ENCODE measurements at regions of chr12 and their contacts with region 1.

Region 1: DNA sequence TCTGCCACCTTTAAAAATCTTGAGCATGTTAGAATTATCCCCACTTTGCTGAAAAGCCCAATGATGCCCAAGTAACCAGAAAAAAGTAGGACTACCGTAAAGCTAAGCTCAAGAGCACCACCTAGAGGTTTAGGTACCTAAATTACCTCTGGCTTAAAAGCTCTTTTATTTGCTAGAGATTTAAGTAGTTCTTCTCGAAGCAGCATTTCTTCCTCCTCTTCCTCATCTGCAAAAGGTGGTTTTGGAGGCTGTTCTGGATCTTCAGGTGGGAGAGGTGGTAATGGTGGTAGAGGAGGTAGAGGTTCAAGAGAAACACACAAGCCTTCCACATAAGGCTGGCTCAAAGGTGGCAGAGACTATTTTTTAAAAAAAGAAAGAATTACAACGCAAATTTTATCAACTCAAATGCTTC is 26.9 kb downstream of the ZFC3H1 start:
- DNase-seq: peak; percentile 70
- H3K4me3 Mint-ChIP-seq: no peak overlapping the region
- H3K27ac Mint-ChIP-seq: no peak overlapping the region
- H3K4me1 Mint-ChIP-seq: peaks cover 6% of the 10 kb centered on the region
- H3K27me3 Mint-ChIP-seq: no peaks in the 10 kb centered on the region
- CTCF ChIP-seq: peak; percentile 66

Region 2: DNA sequence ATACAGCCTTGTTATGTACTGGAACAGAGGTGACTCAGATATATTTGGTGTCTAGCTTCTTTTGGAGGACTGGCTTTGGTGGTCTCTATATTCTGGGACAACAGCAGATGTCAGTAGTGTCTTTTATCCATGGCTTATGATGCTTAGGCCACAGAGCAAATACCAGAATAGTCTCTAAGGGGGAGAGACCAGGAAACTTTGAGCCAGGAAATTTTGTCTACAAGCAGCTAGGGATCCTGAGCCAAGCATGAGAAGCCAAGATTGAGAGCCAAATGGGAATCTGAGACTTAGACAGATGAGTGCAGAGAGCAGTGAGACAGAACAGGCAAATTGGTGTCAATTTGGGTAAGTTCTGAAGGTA is 687.8 kb before region 1 on chr12:
- CTCF ChIA-PET with region 1: no interaction called
- POLR2A ChIA-PET with region 1: no interaction called
- intact Hi-C with region 1: no loop called
- DNase-seq: no peak
- H3K4me3 Mint-ChIP-seq: no peak overlapping the region
- H3K27ac Mint-ChIP-seq: no peak overlapping the region
- H3K4me1 Mint-ChIP-seq: no peaks in the 10 kb centered on the region
- H3K27me3 Mint-ChIP-seq: no peaks in the 10 kb centered on the region
- CTCF ChIP-seq: no peak

Region 3: GRCh38 chr12:71581206-71581605 is 55.5 kb before region 1 on chr12:
- CTCF ChIA-PET with region 1: no interaction called
- POLR2A ChIA-PET with region 1: no interaction called
- intact Hi-C with region 1: no loop called
- DNase-seq: peak; percentile 27
- H3K4me3 Mint-ChIP-seq: no peak overlapping the region
- H3K27ac Mint-ChIP-seq: no peak overlapping the region
- H3K4me1 Mint-ChIP-seq: peaks cover 6% of the 10 kb centered on the region
- H3K27me3 Mint-ChIP-seq: no peaks in the 10 kb centered on the region
- CTCF ChIP-seq: no peak

Region 4: GRCh38 chr12:71610031-71610795 is 26.5 kb before region 1 on chr12:
- CTCF ChIA-PET with region 1: interaction called, 15 read pairs
- POLR2A ChIA-PET with region 1: interaction called, 4 read pairs
- intact Hi-C with region 1: no loop called
- DNase-seq: no peak
- H3K4me3 Mint-ChIP-seq: no peak overlapping the region
- H3K27ac Mint-ChIP-seq: no peak overlapping the region
- H3K4me1 Mint-ChIP-seq: no peaks in the 10 kb centered on the region
- H3K27me3 Mint-ChIP-seq: no peaks in the 10 kb centered on the region
- CTCF ChIP-seq: no peak

Region 5: GRCh38 chr12:71626098-71626497 is 10.6 kb before region 1 on chr12:
- CTCF ChIA-PET with region 1: interaction called, 14 read pairs
- POLR2A ChIA-PET with region 1: interaction called, 4 read pairs
- intact Hi-C with region 1: no loop called
- DNase-seq: no peak
- H3K4me3 Mint-ChIP-seq: no peak overlapping the region
- H3K27ac Mint-ChIP-seq: no peak overlapping the region
- H3K4me1 Mint-ChIP-seq: peaks cover 10% of the 10 kb centered on the region
- H3K27me3 Mint-ChIP-seq: no peaks in the 10 kb centered on the region
- CTCF ChIP-seq: no peak